MCF 10A (cell line): ENCODE measurements at regions of chr4 and their contacts with region 1.

Region 1: GRCh38 chr4:107853444-107854355 is 29.0 kb downstream of the SGMS2 start:
- DNase-seq: no peak
- H3K4me3 Mint-ChIP-seq: no peak overlapping the region
- H3K27ac Mint-ChIP-seq: peak overlapping the region; percentile 88
- H3K4me1 Mint-ChIP-seq: peaks cover 58% of the 10 kb centered on the region
- H3K27me3 Mint-ChIP-seq: no peaks in the 10 kb centered on the region
- CTCF ChIP-seq: no peak

Region 2: DNA sequence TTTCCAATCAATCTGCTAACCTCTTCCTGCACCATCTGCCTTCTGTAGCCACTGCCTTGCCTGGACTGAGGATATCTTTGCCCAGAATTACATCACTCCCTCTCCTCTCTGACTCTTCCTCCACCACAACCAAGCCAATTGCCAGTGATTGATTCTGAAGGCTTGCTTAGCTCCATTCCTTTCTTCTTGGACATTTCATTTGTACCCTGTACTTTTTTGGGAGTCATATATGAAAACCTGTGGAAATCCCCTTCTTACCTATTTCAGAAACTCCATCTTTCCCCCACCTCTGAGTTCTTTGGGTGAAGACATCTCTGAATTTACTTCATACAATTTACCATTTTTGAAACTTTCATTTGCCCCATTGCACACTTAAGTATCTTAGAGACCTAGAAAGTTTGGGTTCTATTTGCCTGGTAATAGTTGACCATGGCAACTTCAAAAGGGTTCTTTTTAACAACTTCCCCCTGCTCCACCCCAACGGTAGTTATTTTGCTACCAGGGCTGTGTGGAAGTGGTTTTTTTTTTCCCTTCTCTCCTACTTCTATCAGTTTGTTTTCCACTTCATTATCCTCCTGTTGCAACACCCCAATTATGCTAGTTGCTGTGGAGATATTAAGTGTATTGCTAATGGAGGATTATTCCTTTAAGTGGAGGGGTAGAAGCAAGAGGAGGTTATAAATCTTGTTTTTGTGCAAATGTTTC is 14.7 kb before region 1 on chr4:
- CTCF ChIA-PET with region 1: interaction called, 3 read pairs
- POLR2A ChIA-PET with region 1: interaction called, 248 read pairs
- intact Hi-C with region 1: no loop called
- DNase-seq: peak; percentile 48
- H3K4me3 Mint-ChIP-seq: no peak overlapping the region
- H3K27ac Mint-ChIP-seq: no peak overlapping the region
- H3K4me1 Mint-ChIP-seq: peaks cover 20% of the 10 kb centered on the region
- H3K27me3 Mint-ChIP-seq: no peaks in the 10 kb centered on the region
- CTCF ChIP-seq: no peak